Mammary epithelial cell (primary cell): ENCODE measurements at regions of chr10 and their contacts with region 1.

Region 1: GRCh38 chr10:48506147-48506917 is 98.5 kb downstream of the ARHGAP22 start:
- DNase-seq: no peak
- H3K4me3 ChIP-seq: no peak overlapping the region
- H3K27ac ChIP-seq: no peak overlapping the region
- H3K4me1 ChIP-seq: peaks cover 10% of the 10 kb centered on the region
- H3K27me3 ChIP-seq: no peaks in the 10 kb centered on the region
- CTCF ChIP-seq: peak in 1 of 2 donors; percentile 42

Region 2: GRCh38 chr10:48224979-48225560 is 281.3 kb before region 1 on chr10:
- CTCF ChIA-PET with region 1: no interaction called
- dilution Hi-C with region 1: no loop called
- in situ Hi-C with region 1: no loop called
- intact Hi-C with region 1: loop called (anchors 10 kb)
- DNase-seq: no peak
- H3K4me3 ChIP-seq: no peak overlapping the region
- H3K27ac ChIP-seq: no peak overlapping the region
- H3K4me1 ChIP-seq: no peaks in the 10 kb centered on the region
- H3K27me3 ChIP-seq: no peaks in the 10 kb centered on the region
- CTCF ChIP-seq: no peak

Region 3: GRCh38 chr10:48444266-48444665 is 62.1 kb before region 1 on chr10:
- CTCF ChIA-PET with region 1: no interaction called
- dilution Hi-C with region 1: no loop called
- in situ Hi-C with region 1: no loop called
- intact Hi-C with region 1: loop called (anchors 1 kb)
- DNase-seq: peak; percentile 33
- H3K4me3 ChIP-seq: no peak overlapping the region
- H3K27ac ChIP-seq: no peak overlapping the region
- H3K4me1 ChIP-seq: peaks cover under 1% of the 10 kb centered on the region
- H3K27me3 ChIP-seq: no peaks in the 10 kb centered on the region
- CTCF ChIP-seq: peak in 1 of 2 donors; percentile 64

Region 4: GRCh38 chr10:48907730-48908129 is 401.4 kb after region 1 on chr10:
- CTCF ChIA-PET with region 1: no interaction called
- dilution Hi-C with region 1: no loop called
- in situ Hi-C with region 1: no loop called
- intact Hi-C with region 1: no loop called
- DNase-seq: no peak
- H3K4me3 ChIP-seq: no peak overlapping the region
- H3K27ac ChIP-seq: no peak overlapping the region
- H3K4me1 ChIP-seq: no peaks in the 10 kb centered on the region
- H3K27me3 ChIP-seq: peaks cover 5% of the 10 kb centered on the region
- CTCF ChIP-seq: no peak